Dendritic cell treated with granulocyte-macrophage colony-stimulating factor and Interleukin-4, amounts not matched to agents 40 ng/mL and 50 ng/mL, for 4 days (primary cell): ENCODE measurements at regions of chr3 and their contacts with region 1.

Region 1: DNA sequence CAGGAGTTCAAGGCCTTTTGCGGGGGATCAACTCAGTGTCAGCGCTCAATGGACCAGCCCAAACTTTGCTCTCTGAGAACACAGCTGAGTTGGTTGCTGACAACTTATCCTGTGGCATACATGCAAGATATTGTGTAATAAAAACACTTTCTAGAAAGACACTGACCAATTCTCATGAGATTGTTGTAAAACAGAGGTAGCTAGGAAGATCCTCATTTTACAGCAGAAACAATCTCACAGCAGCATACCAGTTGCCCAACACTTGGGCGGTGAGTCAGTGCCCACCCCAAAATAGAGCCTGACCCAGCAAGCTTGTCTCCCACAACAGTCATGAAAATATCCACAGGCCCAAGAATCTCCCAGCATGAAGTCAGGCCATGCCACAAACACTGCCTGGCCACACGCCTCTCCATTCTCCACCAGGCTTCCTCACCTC is 18.2 kb downstream of the KLHL6 start:
- H3K4me3 Mint-ChIP-seq: no peak overlapping the region
- H3K27ac Mint-ChIP-seq: peak overlapping the region; percentile 70
- H3K4me1 Mint-ChIP-seq: peaks cover 85% of the 10 kb centered on the region
- H3K27me3 Mint-ChIP-seq: peaks cover 15% of the 10 kb centered on the region

Region 2: GRCh38 chr3:183031826-183032225 is 505.5 kb before region 1 on chr3:
- intact Hi-C with region 1: no loop called
- H3K4me3 Mint-ChIP-seq: no peak overlapping the region
- H3K27ac Mint-ChIP-seq: no peak overlapping the region
- H3K4me1 Mint-ChIP-seq: no peaks in the 10 kb centered on the region
- H3K27me3 Mint-ChIP-seq: no peaks in the 10 kb centered on the region

Region 3: GRCh38 chr3:183489455-183490210 is 47.7 kb before region 1 on chr3:
- intact Hi-C with region 1: loop called (anchors 10 kb)
- H3K4me3 Mint-ChIP-seq: no peak overlapping the region
- H3K27ac Mint-ChIP-seq: no peak overlapping the region
- H3K4me1 Mint-ChIP-seq: peaks cover 7% of the 10 kb centered on the region
- H3K27me3 Mint-ChIP-seq: no peaks in the 10 kb centered on the region

Region 4: DNA sequence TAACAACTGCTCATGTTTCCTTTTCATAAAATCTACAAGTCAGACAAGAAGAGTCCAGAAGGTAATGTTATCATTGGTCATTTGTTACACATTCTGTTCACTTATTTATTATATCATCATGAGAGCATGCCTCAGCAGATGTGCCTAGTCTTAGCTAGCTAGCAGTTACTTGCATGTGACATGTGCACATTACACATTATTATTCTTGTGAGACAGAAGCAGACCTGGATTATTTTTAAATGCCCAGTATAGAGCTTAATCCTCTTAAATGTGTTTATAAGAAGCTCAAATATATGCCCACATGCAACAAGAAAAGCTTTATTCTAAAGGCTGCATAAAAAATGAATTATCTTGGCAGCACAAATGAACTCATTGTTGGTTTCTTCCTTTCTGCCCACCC is 172.9 kb after region 1 on chr3:
- intact Hi-C with region 1: no loop called
- H3K4me3 Mint-ChIP-seq: no peak overlapping the region
- H3K27ac Mint-ChIP-seq: no peak overlapping the region
- H3K4me1 Mint-ChIP-seq: no peaks in the 10 kb centered on the region
- H3K27me3 Mint-ChIP-seq: no peaks in the 10 kb centered on the region